Caco-2 (cell line): ENCODE measurements at regions of chr2 and their contacts with region 1.

Region 1: GRCh38 chr2:206004004-206004693 is 81.8 kb downstream of the INO80D start:
- DNase-seq: peak; percentile 65
- H3K4me3 ChIP-seq: no peak overlapping the region
- H3K4me3 Mint-ChIP-seq: no peak overlapping the region
- H3K27ac Mint-ChIP-seq: no peak overlapping the region
- H3K4me1 ChIP-seq: no peaks in the 10 kb centered on the region
- H3K4me1 Mint-ChIP-seq: no peaks in the 10 kb centered on the region
- H3K27me3 ChIP-seq: no peaks in the 10 kb centered on the region
- H3K27me3 Mint-ChIP-seq: no peaks in the 10 kb centered on the region
- CTCF ChIP-seq: peak; percentile 31 to 78

Region 2: DNA sequence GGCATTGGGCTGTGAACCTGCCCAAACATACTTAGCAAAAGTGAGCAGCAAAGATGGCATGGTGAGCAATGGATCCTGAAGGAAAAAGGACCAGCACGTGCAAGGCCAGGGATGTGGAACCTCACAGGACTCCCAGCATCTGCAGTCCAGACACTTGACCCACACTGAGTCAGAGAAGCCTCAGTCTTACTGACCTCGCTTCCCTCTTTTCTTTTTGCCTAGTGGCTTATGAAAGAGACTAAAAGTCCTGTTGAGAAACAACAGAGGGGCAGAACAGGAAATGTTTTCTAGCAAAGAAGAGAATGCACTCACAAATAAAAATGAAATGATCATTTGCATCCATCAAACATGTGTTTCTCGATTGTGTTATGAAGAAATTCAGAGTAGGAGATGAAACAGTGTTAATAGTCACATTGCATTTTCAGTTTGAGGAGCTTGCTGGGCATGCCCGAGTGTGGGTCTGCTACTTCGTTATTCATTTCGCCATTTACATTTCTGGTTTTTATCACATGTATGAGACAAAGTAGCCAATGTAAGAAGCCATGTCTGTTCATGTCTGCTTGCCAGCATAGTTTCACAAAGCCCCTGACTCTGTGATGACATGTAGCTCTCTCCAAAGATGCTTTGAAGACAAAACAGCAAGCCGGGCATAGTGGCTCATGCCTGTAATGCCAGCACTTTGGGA is 36.6 kb before region 1 on chr2:
- CTCF ChIA-PET with region 1: no interaction called
- POLR2A ChIA-PET with region 1: no interaction called
- intact Hi-C with region 1: no loop called
- DNase-seq: no peak
- H3K4me3 ChIP-seq: no peak overlapping the region
- H3K4me3 Mint-ChIP-seq: no peak overlapping the region
- H3K27ac Mint-ChIP-seq: no peak overlapping the region
- H3K4me1 ChIP-seq: peaks cover 8% of the 10 kb centered on the region; the same call in 1 of the 2 replicates
- H3K4me1 Mint-ChIP-seq: peaks cover 7% of the 10 kb centered on the region
- H3K27me3 ChIP-seq: no peaks in the 10 kb centered on the region
- H3K27me3 Mint-ChIP-seq: no peaks in the 10 kb centered on the region
- CTCF ChIP-seq: no peak

Region 3: DNA sequence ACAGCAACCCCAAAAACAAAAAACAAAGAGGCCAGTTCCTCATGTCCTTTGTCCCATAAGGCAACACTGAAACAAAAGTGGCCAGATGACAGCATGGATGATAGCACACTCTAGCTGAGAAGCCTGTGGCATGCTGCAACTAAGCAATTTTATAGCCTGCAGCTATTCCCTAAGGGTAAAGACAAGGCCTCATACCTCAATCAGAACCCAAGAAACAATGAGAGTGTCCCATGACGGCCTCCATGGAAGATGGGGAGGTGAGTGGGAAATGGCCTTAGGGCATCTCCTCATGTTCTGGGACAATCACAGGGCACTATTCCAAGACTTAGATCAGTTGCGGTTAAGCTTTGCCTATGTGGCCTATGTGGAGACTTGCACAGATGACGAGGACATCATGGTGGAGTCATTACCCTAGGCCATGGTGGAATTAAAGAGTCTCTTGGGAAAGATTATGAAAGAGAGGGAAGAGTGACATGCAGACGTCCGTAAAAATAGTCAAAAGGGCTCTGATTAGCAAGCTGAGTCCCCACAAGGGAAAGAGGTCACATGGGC is 21.3 kb before region 1 on chr2:
- CTCF ChIA-PET with region 1: no interaction called
- POLR2A ChIA-PET with region 1: no interaction called
- intact Hi-C with region 1: no loop called
- DNase-seq: no peak
- H3K4me3 ChIP-seq: no peak overlapping the region
- H3K4me3 Mint-ChIP-seq: no peak overlapping the region
- H3K27ac Mint-ChIP-seq: peak overlapping the region; percentile 21
- H3K4me1 ChIP-seq: peaks cover 38% of the 10 kb centered on the region
- H3K4me1 Mint-ChIP-seq: peaks cover 18% of the 10 kb centered on the region
- H3K27me3 ChIP-seq: no peaks in the 10 kb centered on the region
- H3K27me3 Mint-ChIP-seq: no peaks in the 10 kb centered on the region
- CTCF ChIP-seq: no peak

Region 4: DNA sequence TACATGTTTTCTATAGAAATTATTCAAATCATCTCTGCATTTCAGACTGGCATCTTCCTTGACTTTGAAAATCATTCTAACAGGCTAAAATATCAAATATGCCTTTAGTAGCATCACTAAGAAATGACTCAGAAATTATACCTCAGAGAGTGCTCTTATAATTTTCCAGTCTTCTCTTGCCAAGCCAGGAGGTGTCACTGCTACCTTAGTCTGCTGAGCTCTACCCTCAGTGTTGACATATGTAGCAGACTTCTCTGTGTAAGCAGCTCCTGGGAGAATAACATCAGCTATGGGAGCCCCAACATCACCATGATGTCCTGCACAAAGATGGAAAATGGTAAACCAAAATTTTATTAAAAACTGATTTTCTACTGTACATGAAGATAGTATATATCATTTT is 123.5 kb after region 1 on chr2:
- CTCF ChIA-PET with region 1: interaction called, 3 read pairs
- POLR2A ChIA-PET with region 1: no interaction called
- intact Hi-C with region 1: loop called (anchors 2 kb)
- DNase-seq: peak in 1 of 2 experiments; percentile 32
- H3K4me3 ChIP-seq: no peak overlapping the region
- H3K4me3 Mint-ChIP-seq: no peak overlapping the region
- H3K27ac Mint-ChIP-seq: no peak overlapping the region
- H3K4me1 ChIP-seq: no peaks in the 10 kb centered on the region
- H3K4me1 Mint-ChIP-seq: no peaks in the 10 kb centered on the region
- H3K27me3 ChIP-seq: no peaks in the 10 kb centered on the region
- H3K27me3 Mint-ChIP-seq: no peaks in the 10 kb centered on the region
- CTCF ChIP-seq: peak in 1 of 2 experiments; percentile 15

Region 5: DNA sequence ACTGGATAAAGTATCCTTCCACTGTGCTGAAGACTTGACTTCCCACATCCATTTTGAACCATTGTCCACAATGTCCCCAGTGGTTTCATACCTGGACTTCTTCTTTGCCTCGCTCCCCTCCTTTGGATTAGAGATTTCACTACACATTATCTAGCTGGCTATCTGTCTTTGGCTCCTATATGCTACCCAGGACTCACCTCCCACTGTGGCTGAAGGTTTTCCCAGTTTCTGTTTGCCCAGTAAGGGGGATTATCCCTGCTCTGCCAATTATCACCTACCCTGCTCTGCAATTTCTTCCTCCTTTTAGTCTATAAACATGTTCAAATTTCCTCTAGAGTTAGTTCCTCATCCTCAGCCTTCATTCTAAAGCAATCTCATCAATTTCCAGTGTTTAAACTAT is 146.0 kb after region 1 on chr2:
- CTCF ChIA-PET with region 1: interaction called, 3 read pairs
- POLR2A ChIA-PET with region 1: no interaction called
- intact Hi-C with region 1: loop called (anchors 1 kb)
- DNase-seq: no peak
- H3K4me3 ChIP-seq: no peak overlapping the region
- H3K4me3 Mint-ChIP-seq: no peak overlapping the region
- H3K27ac Mint-ChIP-seq: no peak overlapping the region
- H3K4me1 ChIP-seq: no peaks in the 10 kb centered on the region
- H3K4me1 Mint-ChIP-seq: no peaks in the 10 kb centered on the region
- H3K27me3 ChIP-seq: no peaks in the 10 kb centered on the region
- H3K27me3 Mint-ChIP-seq: no peaks in the 10 kb centered on the region
- CTCF ChIP-seq: no peak